Left ventricle myocardium superior (tissue), 1 donor: ENCODE measurements at regions of chr4 and their contacts with region 1.

Region 1: GRCh38 chr4:173505924-173506518 is 24.0 kb downstream of the HAND2 start:
- DNase-seq: peak; percentile 77
- ATAC-seq: peak; percentile 71

Region 2: GRCh38 chr4:173565281-173565680 is 59.3 kb after region 1 on chr4:
- intact Hi-C with region 1: no loop called
- DNase-seq: no peak
- ATAC-seq: no peak

Region 3: DNA sequence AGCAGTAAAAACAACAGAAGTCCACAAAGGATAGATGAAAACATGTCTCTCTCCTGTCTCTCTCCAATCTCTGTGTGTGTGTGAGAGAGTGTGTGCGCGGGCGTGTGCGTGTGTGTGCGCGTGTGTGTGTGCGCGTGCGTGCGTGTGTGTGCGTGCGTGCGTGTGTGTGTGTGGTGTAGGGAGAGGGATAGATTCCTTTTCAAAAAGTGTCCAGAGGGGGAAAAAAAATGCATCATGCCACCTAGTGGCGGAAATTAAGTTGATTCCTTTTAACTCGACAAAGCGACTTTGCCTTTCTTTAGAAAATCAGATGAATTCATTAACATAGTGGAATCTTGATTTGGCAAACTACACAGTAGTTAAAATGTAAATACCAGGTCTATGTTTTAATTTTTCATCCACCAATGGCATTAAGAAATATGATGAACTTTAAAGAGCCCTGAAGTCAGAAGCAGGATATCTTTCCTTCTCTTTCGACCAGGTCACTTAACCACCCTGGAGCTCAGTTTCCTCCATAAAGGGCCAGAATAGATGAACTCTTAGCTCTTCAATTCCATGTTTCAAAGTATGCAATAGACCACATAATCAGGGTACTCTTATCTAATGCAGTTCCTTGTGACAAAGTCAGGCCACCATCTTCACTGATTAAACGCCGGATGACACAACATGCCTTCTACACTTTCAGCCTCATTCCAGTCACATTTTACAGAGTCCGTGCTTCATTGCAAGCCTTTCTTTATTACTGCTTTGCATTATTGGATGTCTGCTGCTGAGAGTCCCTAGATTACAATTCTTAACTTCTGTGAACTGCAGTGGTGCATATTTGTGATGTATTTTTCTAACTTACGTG is 614.6 kb after region 1 on chr4:
- intact Hi-C with region 1: loop called (anchors 10 kb)
- DNase-seq: peak; percentile 78
- ATAC-seq: peak; percentile 83